CD8-positive, alpha-beta memory T cell (primary cell): ENCODE measurements at regions of chr3 and their contacts with region 1.

Region 1: DNA sequence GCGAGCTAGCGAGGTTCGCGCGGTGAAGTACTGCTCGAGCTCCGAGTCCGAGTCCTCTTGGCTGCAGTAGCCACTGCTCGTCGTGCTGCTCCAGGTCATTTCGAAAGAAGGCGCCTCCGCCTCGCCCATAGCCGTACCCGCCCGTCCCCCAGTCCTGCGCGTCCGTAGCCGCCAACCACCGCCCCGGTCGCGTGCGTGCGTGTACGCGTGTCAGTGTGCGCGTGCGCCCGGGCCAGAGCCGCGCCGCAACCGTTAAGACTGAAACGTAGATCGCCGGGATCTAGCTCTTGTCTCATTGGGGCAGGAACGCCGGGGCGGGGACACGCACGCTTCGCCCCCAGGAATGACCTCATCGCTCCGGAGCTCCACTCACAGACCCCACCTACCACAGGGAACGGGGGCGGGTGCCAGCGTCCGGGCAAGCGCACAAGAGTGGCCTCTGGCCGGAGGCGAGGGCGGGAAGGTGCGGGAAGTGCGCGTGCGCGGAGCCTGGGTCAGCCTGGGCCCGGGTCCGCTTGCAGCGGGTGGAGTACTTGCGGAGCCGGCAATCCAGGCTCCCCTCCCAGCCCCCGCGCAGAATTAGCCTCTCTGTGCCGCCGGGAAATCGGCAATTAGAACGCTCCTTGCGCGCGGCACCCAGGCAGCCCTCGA is 3.3 kb downstream of the RASSF1 start:
- DNase-seq: peak; percentile 90 to 97 (median 93)
- H3K4me3 ChIP-seq: peak overlapping the region; percentile 73
- H3K4me3 Mint-ChIP-seq: peak overlapping the region; percentile 89 to 97 (median 94)
- H3K27ac ChIP-seq: peak overlapping the region; percentile 88
- H3K27ac Mint-ChIP-seq: peak overlapping the region; percentile 75 to 98 (median 97)
- H3K4me1 ChIP-seq: peaks cover 71% of the 10 kb centered on the region
- H3K4me1 Mint-ChIP-seq: peaks cover 56 to 79% (median 74%) of the 10 kb centered on the region in 3 donors
- H3K27me3 ChIP-seq: no peaks in the 10 kb centered on the region
- H3K27me3 Mint-ChIP-seq: peaks cover 0 to 2% of the 10 kb centered on the region in 2 donors

Region 2: GRCh38 chr3:50292159-50293078 is 44.9 kb before region 1 on chr3 and contains the start of gene IFRD2:
- CTCF ChIA-PET with region 1: interaction called, 12 read pairs
- POLR2A ChIA-PET with region 1: interaction called, 11 read pairs
- DNase-seq: peak; percentile 93 to 96 (median 93)
- H3K4me3 ChIP-seq: peak within 1 kb of the TSS; percentile 88
- H3K4me3 Mint-ChIP-seq: peak within 1 kb of the TSS; percentile 86 to 93 (median 88)
- H3K27ac ChIP-seq: peak within 1 kb of the TSS; percentile 62
- H3K27ac Mint-ChIP-seq: peak within 1 kb of the TSS; percentile 85 to 98 (median 96)
- H3K4me1 ChIP-seq: peaks cover 21% of the 10 kb centered on the region
- H3K4me1 Mint-ChIP-seq: peaks cover 14 to 26% (median 16%) of the 10 kb centered on the region in 3 donors
- H3K27me3 ChIP-seq: no peaks in the 10 kb centered on the region
- H3K27me3 Mint-ChIP-seq: no peaks in the 10 kb centered on the region
- total RNA-seq, gene IFRD2: 191 to 192 TPM

Region 3: DNA sequence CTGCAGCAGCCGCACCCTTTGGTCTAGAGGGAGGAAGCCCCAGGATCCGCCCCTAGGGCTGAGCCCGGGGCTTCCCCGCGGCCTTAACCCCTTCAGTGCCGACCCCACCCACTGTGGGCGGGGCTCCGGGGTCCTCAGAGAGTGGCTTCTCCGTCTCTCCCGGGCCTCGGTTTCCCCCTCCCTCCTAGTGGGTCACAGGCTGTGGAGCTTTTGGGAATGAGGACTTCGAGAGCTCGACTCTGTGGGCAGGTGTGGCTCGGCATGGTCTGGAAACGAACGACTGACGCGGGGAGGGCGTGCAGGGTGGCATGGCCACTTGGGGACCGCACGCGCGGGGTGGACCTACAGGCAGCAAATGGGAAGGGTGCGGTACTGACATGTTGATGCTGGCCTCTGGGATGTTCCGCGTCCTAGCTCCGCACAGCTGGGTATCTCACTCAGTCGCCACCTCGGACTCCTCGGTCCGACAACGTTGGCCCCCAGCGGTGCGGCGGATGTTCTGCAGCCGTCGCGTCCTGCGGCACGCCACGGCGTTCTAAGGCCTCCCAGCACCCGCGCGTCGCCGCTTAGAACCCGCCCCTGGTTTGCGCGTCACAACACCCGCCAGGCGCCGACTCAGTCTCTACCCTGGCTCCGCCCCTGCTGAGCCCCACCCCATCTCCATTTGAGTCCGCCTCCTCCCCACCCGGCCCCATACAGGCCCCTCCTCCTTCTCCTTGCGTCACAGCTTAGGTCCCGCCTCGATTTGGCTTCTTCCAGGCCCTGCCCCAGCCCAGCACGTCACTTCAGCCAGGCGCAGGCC is 38.3 kb before region 1 on chr3 and contains the starts of genes HYAL3 and NAA80:
- CTCF ChIA-PET with region 1: interaction called, 12 read pairs
- POLR2A ChIA-PET with region 1: interaction called, 29 read pairs
- DNase-seq: peak; percentile 98 to 100 (median 99)
- H3K4me3 ChIP-seq: peak within 1 kb of the TSS; percentile 89
- H3K4me3 Mint-ChIP-seq: peak within 1 kb of the TSS; percentile 93 to 98 (median 95)
- H3K27ac ChIP-seq: peak within 1 kb of the TSS; percentile 96
- H3K27ac Mint-ChIP-seq: peak within 1 kb of the TSS; percentile 97 to 100 (median 99)
- H3K4me1 ChIP-seq: peaks cover 25% of the 10 kb centered on the region
- H3K4me1 Mint-ChIP-seq: peaks cover 21 to 50% (median 22%) of the 10 kb centered on the region in 3 donors
- H3K27me3 ChIP-seq: no peaks in the 10 kb centered on the region
- H3K27me3 Mint-ChIP-seq: no peaks in the 10 kb centered on the region
- total RNA-seq, gene HYAL3: 7.7 to 8.4 TPM
- total RNA-seq, gene NAA80: 17.3 to 18.3 TPM

Region 4: DNA sequence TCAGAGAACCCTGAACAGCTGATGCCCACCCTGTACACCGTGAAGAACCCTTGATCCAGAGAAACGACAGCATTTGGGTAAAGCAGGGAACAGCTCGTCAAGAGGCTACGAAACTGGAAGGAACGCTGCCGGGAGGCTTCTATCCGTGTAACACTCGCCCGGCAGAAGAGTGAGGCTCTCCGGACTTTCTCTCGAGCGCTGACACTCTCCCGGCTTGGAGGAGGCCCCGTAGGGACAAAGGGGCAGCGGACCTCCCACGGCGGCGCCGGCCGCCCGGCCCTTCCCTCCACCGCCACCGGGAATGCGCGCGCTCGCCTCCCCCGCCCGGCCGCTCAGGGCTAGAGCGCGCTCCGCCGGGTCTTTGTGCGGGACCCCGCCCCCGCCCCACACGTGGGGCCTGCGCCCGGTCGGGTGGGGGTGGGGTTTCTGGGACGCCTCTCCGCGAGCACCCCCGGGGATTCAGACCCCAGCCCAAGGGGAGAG is 16.4 kb before region 1 on chr3:
- CTCF ChIA-PET with region 1: interaction called, 22 read pairs
- POLR2A ChIA-PET with region 1: interaction called, 57 read pairs
- DNase-seq: peak in 4 of 5 donors; percentile 46 to 72 (median 54)
- H3K4me3 ChIP-seq: peak overlapping the region; percentile 91
- H3K4me3 Mint-ChIP-seq: peak overlapping the region; percentile 85 to 94 (median 92)
- H3K27ac ChIP-seq: peak overlapping the region; percentile 88
- H3K27ac Mint-ChIP-seq: peak overlapping the region; percentile 73 to 93 (median 87)
- H3K4me1 ChIP-seq: peaks cover 35% of the 10 kb centered on the region
- H3K4me1 Mint-ChIP-seq: peaks cover 37 to 62% (median 48%) of the 10 kb centered on the region in 3 donors
- H3K27me3 ChIP-seq: no peaks in the 10 kb centered on the region
- H3K27me3 Mint-ChIP-seq: peaks cover 0 to 3% of the 10 kb centered on the region in 2 donors

Region 5: DNA sequence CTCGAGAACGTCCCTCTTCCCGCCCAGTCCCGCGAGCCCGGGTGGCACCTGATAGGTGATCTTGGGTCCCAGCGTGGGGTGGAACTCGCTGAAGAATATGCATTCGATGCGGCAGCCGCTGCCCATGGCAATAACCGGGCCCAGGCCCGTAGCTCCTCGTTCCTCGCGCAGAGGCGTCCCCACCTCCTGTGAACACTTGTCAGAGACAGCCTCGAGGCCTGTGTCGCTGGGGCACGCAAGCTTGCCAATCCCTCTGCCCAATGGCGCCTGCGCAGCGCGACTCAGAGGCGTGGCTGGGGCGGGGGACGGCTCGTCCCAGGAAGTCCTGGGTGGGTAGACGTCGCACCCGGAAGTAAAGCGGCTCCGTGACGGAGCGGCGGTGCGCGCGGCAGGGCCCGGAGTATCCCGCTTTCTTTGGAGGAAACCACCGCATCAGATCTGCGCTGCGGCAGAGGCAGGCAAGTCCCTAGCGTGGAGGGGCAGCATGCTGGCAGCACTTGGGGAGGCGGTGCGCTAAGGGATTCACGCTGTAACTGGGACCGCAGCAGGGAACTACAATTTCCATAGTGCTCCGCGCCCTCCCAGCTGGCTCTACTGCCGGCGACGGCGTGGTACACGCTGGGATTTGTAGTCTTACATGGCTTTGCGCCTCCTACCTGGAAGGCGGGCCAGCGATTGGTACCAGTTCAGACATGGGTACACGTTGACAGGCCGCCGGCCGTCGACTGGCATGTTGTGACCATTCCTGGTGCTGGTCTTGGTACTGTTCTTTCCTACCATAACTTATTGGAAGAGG is 13.4 kb after region 1 on chr3 and contains the starts of genes CYB561D2 and NPRL2:
- CTCF ChIA-PET with region 1: interaction called, 103 read pairs
- POLR2A ChIA-PET with region 1: interaction called, 51 read pairs
- DNase-seq: peak; percentile 98 to 100 (median 99)
- H3K4me3 ChIP-seq: peak within 1 kb of the TSS; percentile 100
- H3K4me3 Mint-ChIP-seq: peak within 1 kb of the TSS; percentile 96 to 99 (median 98)
- H3K27ac ChIP-seq: peak within 1 kb of the TSS; percentile 95
- H3K27ac Mint-ChIP-seq: peak within 1 kb of the TSS; percentile 97 to 99 (median 98)
- H3K4me1 ChIP-seq: peaks cover 55% of the 10 kb centered on the region
- H3K4me1 Mint-ChIP-seq: peaks cover 48 to 82% (median 52%) of the 10 kb centered on the region in 3 donors
- H3K27me3 ChIP-seq: no peaks in the 10 kb centered on the region
- H3K27me3 Mint-ChIP-seq: no peaks in the 10 kb centered on the region
- total RNA-seq, gene CYB561D2: 32.4 to 37.7 TPM
- total RNA-seq, gene NPRL2: 44.6 to 48.0 TPM

Region 6: GRCh38 chr3:50466177-50466576 is 128.9 kb after region 1 on chr3:
- CTCF ChIA-PET with region 1: no interaction called
- POLR2A ChIA-PET with region 1: no interaction called
- DNase-seq: peak in 1 of 5 donors; percentile 12
- H3K4me3 ChIP-seq: no peak overlapping the region
- H3K4me3 Mint-ChIP-seq: peak overlapping the region in 1 of 7 donors; percentile 56
- H3K27ac ChIP-seq: no peak overlapping the region
- H3K27ac Mint-ChIP-seq: peak overlapping the region in 5 of 8 donors; percentile 16 to 83 (median 49)
- H3K4me1 ChIP-seq: peaks cover 4% of the 10 kb centered on the region
- H3K4me1 Mint-ChIP-seq: peaks cover 6% of the 10 kb centered on the region in 3 donors
- H3K27me3 ChIP-seq: no peaks in the 10 kb centered on the region
- H3K27me3 Mint-ChIP-seq: no peaks in the 10 kb centered on the region